ENCODE measurements at regions of chr3 and their contacts with region 1.

Region 1: GRCh38 chr3:99023590-99024192 is 122.2 kb upstream of the DCBLD2 start:
- DNase-seq: no peak
- H3K4me3 Mint-ChIP-seq: no peak overlapping the region
- H3K27ac Mint-ChIP-seq: no peak overlapping the region
- H3K4me1 Mint-ChIP-seq: no peaks in the 10 kb centered on the region
- H3K27me3 Mint-ChIP-seq: peaks cover 4% of the 10 kb centered on the region

Region 2: DNA sequence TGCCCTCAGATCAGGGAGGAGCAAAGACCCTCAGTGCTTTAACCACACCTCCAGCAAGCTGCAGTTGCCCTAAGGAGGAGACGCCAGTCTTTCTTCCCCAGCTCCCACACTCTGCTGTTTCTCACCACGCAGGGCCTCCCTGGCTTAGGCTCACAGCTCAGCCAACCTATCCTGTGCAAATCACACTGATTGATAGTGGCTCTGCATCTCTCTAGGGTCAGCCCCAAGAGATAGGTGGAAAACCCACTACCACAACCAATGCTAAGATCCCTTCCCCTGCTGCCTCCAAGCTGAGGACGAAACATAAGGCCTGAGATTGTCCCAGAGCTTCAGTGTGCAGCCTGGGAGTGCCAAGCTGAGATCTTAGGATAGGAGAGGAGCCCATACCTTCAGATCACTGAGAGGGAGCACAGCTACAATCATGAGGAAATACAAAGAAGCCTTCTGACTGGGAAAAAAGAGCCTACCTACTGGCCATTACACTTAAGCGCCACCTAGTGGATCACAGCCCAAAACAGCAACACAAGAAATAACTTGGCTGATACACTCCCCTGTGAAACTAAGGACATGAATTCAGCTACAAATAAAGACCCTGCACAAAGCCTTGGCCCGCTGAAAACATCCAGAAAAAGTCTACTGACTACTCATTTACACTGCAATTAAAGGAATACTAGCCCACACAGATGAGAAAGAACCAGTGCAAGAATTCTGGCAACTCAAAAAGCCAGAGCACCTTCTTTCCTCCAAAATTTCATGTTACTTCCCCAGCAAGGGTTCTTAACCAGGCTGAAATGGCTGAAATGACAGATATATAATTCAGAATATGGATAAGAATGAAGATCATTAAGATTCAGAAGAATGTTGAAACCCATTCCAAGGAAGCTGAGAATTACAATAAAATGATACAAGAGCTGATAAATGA is 149.3 kb after region 1 on chr3:
- intact Hi-C with region 1: loop called (anchors 10 kb)
- DNase-seq: peak; percentile 80
- H3K4me3 Mint-ChIP-seq: no peak overlapping the region
- H3K27ac Mint-ChIP-seq: no peak overlapping the region
- H3K4me1 Mint-ChIP-seq: no peaks in the 10 kb centered on the region
- H3K27me3 Mint-ChIP-seq: peaks cover 1% of the 10 kb centered on the region

Region 3: DNA sequence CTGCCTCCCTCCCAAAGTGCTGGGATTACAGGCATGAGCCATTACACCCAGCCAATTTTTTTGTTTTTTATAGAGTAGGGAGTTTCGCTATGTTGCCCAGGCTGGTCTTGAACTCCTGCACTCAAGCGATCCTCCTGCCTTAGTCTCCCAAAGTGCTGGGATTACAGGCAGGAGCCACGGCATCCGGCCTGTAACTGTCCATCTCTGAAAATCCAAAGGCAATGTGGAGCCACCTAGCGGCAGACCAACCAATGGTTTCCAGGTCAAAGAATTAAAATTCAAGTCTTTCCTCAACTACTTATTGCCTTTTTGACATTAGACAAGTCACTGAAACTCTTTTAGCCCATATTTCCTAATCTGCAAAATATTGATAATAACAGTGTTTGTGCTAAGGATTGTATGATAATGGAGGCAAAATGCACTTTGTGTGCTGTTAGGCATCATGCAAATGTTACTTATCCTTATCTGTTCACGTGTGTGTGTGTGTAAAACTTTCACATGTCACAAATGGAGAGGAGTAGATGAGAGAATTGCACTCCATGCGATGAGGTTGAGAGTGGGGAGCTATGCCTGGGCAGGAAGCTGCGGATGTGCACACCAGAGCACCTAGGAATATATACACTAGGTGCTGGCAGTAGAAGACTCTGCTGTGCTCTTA is 663.4 kb after region 1 on chr3:
- intact Hi-C with region 1: loop called (anchors 10 kb)
- DNase-seq: peak; percentile 80
- H3K4me3 Mint-ChIP-seq: no peak overlapping the region
- H3K27ac Mint-ChIP-seq: no peak overlapping the region
- H3K4me1 Mint-ChIP-seq: no peaks in the 10 kb centered on the region
- H3K27me3 Mint-ChIP-seq: peaks cover 8% of the 10 kb centered on the region

Region 4: DNA sequence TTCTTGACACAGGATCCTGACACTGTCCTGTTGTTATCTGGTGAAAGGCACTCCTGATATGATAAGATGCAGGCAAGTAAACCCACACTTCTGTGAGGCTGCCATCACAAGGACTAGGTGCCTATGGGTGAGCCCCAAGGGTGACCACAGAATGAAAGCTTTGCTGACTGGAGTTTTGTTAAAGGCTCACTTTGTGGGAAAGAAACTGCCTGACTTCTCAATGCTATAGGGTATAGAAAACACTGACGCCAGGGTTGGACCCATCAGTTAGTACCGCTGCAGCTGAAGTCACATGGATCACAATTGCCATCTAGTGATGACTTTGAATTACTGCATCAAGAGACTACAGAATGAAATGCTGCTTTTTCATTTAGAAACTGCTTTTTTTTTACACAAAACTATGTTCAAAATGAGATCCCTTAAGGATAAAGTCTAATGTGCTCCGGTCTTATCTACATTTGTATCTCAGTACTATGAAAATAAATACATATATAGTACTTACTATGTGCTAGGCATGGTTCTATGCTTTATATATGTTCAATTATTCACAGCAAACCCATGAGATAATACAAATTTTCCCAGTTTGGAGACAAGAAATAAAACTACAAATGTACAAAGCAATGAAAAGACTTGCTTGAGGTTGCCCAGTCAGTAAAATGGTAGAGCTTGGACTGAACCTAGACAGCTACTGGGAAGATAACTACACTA is 729.7 kb after region 1 on chr3:
- intact Hi-C with region 1: loop called (anchors 2 kb)
- DNase-seq: peak; percentile 68
- H3K4me3 Mint-ChIP-seq: no peak overlapping the region
- H3K27ac Mint-ChIP-seq: no peak overlapping the region
- H3K4me1 Mint-ChIP-seq: no peaks in the 10 kb centered on the region
- H3K27me3 Mint-ChIP-seq: peaks cover 26% of the 10 kb centered on the region

Region 5: DNA sequence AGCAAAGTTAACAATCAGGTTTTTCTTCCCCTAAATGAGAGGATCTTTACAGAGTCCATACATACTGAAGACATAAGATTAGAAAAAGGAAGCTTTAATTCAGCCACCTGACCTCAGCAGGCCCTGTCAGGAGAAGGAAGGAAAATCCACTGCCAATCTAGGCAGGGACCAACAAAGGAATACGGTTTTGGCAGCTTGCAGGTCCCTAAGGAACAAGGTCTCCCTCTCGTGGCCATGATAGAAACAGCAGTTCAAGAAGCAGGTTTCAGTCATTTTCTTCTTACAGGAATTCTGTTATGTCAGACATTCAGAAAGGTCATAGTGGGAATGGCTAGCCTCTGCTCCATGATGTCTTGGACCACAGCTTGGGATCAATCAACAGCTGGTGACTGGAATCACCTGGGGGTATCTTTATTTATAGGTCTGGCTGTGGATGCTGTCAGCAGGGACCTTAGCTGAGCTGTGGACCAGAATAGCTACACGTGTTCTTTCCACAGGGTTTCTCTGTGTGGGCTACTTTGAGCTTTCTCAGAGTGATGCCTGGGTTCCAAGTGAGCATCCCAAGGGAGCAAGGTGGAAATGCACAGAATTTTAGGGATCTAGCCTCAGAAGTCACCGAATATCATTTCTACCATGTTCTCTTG is 784.6 kb after region 1 on chr3:
- intact Hi-C with region 1: loop called (anchors 5 kb)
- DNase-seq: peak; percentile 81
- H3K4me3 Mint-ChIP-seq: no peak overlapping the region
- H3K27ac Mint-ChIP-seq: no peak overlapping the region
- H3K4me1 Mint-ChIP-seq: peaks cover 3% of the 10 kb centered on the region
- H3K27me3 Mint-ChIP-seq: peaks cover 12% of the 10 kb centered on the region

Measured in activated CD4-positive, alpha-beta T cell treated with anti-CD3 and anti-CD28 coated beads, Interleukin-2, amount 10 ng/mL, durations not matched to agents 24 days and 14 days (primary cell).